HEK293 (cell line): ENCODE measurements at regions of chr9 and their contacts with region 1.

Region 1: GRCh38 chr9:121213136-121213806 is 11.6 kb upstream of the RAB14 start:
- H3K4me3 ChIP-seq: no peak overlapping the region
- H3K27ac ChIP-seq: no peak overlapping the region
- H3K4me1 ChIP-seq: no peaks in the 10 kb centered on the region
- CTCF ChIP-seq: peak; percentile 44; the same call in 1 of the 2 replicates

Region 2: DNA sequence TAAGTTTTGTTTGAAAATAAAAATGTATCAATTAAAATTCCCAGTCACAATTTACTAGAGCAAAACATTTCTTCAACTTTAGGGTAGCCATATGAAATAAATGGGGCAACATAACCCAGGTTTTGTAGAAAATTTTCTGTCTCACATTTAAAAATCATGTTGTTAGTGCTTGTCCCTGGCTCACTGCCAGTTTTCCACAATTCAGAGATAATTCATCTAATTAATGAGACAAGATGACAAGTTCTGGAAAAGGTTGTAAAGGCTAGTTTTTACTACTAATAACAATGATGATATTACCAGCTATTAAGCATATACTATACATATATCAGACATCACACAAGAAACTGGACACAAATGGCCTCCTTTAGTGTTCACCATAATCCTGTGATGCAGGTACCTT is 544.9 kb before region 1 on chr9:
- CTCF ChIA-PET with region 1: no interaction called
- POLR2A ChIA-PET with region 1: no interaction called
- H3K4me3 ChIP-seq: no peak overlapping the region
- H3K27ac ChIP-seq: no peak overlapping the region
- H3K4me1 ChIP-seq: no peaks in the 10 kb centered on the region; the same call in 1 of the 2 replicates
- CTCF ChIP-seq: no peak

Region 3: DNA sequence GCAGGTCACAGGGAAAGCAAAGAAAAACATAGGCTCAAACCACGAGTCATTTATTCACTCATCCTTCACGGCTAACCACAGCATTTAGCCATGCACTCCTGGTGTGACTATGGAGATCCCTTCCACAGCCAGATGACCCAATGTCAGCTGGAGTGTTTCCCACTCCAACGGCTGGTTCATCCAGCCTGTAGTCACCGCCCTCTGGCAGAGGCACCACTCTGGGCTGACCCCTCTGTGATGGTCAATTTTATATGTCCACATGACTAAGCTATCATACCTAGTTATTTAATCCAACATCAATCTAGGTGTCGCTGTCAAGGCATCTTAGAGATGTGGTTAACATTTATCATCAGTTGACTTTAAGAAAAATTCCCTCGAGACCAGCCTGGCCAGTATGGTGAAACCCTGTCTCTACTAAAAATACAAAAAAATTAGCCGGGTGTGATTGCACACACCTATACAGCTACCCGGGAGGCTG is 326.7 kb before region 1 on chr9:
- CTCF ChIA-PET with region 1: no interaction called
- POLR2A ChIA-PET with region 1: no interaction called
- H3K4me3 ChIP-seq: no peak overlapping the region
- H3K27ac ChIP-seq: no peak overlapping the region
- H3K4me1 ChIP-seq: no peaks in the 10 kb centered on the region
- CTCF ChIP-seq: no peak

Region 4: DNA sequence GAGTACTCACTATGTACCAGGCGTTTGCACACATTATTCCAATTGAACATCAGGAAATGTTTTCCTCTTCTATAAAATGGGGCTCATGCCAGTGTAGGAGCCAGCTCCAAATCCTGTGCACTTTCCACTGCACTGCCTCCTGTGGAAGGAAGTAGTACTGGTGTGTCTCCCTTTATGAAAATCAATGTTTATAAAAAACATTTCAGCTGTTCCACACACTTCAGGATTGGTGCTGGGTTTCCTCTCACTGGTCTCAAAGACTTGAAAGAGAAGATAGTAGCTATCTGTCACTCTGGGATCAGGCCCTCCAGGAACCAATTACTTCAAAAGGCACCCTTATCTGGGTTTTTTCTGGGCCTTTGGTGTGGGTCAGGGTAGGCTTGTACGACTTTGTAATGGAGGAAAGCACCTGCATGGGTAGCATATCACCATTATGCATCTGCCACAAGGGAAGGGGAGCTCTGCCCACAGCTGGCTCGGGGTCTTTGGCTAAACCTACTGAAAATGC is 44.1 kb before region 1 on chr9:
- CTCF ChIA-PET with region 1: no interaction called
- POLR2A ChIA-PET with region 1: no interaction called
- H3K4me3 ChIP-seq: no peak overlapping the region
- H3K27ac ChIP-seq: no peak overlapping the region
- H3K4me1 ChIP-seq: no peaks in the 10 kb centered on the region
- CTCF ChIP-seq: no peak

Region 5: DNA sequence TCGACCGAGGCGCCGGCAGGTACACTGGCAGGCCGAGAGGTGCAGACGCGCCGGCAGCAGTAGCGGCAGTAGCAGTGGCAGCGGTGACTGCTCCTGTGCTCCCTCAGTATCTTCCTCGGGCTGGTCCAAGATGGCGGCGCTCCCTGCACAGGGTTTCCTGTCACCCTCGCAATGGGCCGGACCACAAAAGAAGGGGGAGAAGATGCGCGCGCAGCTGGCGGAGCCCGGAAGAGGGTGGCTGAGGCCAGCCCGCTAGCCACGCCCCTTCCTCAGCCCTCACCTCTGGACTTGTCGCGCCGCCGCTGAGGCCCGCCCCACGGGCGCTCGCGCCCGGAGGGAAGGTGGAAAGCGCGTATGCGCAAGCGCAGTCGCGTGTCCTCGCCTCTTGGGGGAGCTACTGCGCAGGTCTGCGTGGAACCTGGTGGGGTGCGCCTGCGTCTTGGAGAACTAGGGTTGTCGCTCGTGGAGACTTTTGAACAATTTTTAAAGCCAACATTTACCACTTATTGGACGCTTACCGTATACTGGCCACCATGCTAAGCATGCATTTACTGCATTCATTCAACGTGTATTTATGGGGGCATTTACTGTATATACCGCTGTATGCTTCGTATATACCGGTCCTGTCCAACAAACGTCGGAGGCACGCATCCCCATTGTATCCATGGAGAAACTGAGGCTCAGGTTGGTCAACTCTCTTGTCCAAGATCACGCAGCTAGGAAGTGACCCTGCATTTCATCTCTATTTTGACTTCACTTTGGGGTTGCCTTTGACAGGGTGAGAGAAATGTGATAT is 11.3 kb before region 1 on chr9 and contains the start of gene RAB14:
- CTCF ChIA-PET with region 1: interaction called, 36 read pairs
- POLR2A ChIA-PET with region 1: interaction called, 3 read pairs
- H3K4me3 ChIP-seq: peak within 1 kb of the TSS; percentile 95
- H3K27ac ChIP-seq: peak within 1 kb of the TSS; percentile 87
- H3K4me1 ChIP-seq: peaks cover 4% of the 10 kb centered on the region; the same call in 1 of the 2 replicates
- CTCF ChIP-seq: peak; percentile 80

Region 6: GRCh38 chr9:121267689-121268597 is 54.7 kb after region 1 on chr9 and contains the start of gene GSN:
- CTCF ChIA-PET with region 1: interaction called, 14 read pairs
- POLR2A ChIA-PET with region 1: no interaction called
- H3K4me3 ChIP-seq: peak within 1 kb of the TSS; percentile 66
- H3K27ac ChIP-seq: no peak within 1 kb of the TSS
- H3K4me1 ChIP-seq: peaks cover 2% of the 10 kb centered on the region; the same call in 1 of the 2 replicates
- CTCF ChIP-seq: no peak

Region 7: DNA sequence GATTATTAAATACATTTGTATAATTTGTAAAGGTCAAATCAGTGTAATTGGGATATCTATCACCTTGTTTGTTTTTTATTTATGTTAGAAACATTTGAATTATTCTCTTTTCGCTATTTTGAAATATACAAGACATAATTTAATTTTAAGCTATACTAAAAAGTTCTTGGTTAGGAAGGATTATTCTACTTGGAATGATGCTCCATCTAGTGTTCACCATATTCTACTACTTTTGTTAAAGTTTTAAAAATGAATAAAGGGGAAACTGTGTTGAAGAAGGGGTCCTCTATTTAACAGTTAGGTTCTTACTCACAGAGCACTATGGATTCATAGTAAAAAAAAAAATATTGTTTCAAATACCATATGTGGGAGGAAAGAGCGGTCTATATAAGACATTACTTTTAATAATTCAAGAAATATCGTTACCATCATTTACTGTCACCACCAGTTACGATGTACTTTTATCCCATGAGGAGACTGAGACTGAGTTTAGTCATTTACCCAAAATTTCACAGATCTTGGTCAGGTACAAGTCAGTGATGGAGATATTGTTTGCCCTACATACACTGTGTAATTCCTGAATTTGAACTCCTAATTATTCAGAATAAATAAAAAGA is 163.1 kb after region 1 on chr9:
- CTCF ChIA-PET with region 1: interaction called, 21 read pairs
- POLR2A ChIA-PET with region 1: no interaction called
- H3K4me3 ChIP-seq: no peak overlapping the region
- H3K27ac ChIP-seq: no peak overlapping the region
- H3K4me1 ChIP-seq: no peaks in the 10 kb centered on the region
- CTCF ChIP-seq: no peak

Region 8: DNA sequence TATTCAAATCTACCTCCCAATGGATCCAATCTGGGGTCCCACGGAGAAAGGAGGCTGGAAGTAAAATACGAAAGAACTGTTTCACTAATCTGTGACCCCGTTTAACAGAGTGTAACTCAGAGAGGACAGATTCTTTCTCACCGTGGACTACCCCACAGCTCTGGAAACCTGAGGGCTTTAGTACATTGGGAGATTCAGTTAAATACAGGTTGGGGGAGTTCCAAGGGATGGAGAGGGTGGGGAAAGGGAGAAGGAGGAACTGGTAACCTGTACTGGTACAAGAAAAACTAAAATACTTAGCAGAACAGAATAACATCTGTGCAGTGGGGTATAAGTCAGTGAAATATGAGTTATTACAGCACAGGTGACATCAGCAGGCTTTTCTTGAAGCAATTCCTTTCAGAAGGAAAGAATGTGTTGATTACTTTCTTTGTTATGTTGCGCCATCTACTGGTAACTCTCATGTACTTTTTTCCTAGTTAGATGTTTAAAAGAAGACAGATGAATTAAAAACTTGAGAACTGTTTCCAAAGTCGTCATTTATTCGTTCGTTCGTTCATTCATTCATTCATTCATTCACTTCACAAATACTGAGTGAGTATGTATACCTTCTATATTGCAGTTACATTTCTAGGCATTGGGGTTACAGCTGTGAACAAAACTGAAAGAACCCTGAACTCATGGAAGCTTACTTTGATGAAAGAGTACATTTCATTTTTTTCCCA is 186.8 kb after region 1 on chr9:
- CTCF ChIA-PET with region 1: interaction called, 107 read pairs
- POLR2A ChIA-PET with region 1: no interaction called
- H3K4me3 ChIP-seq: no peak overlapping the region
- H3K27ac ChIP-seq: no peak overlapping the region
- H3K4me1 ChIP-seq: no peaks in the 10 kb centered on the region
- CTCF ChIP-seq: no peak